Dendritic cell treated with granulocyte-macrophage colony-stimulating factor and Interleukin-4, amounts not matched to agents 40 ng/mL and 50 ng/mL, for 4 days (primary cell): ENCODE measurements at regions of chr4 and their contacts with region 1.

Region 1: GRCh38 chr4:73662709-73663546 is 42.7 kb upstream of the RASSF6 start:
- H3K4me3 Mint-ChIP-seq: no peak overlapping the region
- H3K27ac Mint-ChIP-seq: no peak overlapping the region
- H3K4me1 Mint-ChIP-seq: peaks cover 5% of the 10 kb centered on the region
- H3K27me3 Mint-ChIP-seq: peaks cover 7% of the 10 kb centered on the region

Region 2: DNA sequence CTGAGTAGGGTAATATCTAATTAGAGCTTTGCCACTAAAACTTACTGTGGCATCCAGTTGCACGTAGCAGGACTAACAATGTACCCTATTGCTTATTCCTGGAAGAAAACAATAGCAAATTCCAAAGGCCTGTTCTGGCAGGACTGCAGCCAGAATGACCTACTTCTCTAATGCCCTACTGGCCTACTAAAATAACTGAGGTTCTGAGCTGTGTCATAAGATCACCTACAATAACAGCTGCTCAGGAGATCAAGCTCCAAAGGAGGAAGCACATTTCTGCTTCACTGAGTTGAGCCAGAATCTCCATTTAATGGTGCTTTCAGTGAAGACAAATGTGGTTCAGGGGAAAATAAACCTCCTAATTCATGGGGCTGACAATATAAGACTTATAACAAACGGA is 35.3 kb after region 1 on chr4:
- intact Hi-C with region 1: no loop called
- H3K4me3 Mint-ChIP-seq: no peak overlapping the region
- H3K27ac Mint-ChIP-seq: no peak overlapping the region
- H3K4me1 Mint-ChIP-seq: peaks cover 27% of the 10 kb centered on the region
- H3K27me3 Mint-ChIP-seq: peaks cover 3% of the 10 kb centered on the region

Region 3: DNA sequence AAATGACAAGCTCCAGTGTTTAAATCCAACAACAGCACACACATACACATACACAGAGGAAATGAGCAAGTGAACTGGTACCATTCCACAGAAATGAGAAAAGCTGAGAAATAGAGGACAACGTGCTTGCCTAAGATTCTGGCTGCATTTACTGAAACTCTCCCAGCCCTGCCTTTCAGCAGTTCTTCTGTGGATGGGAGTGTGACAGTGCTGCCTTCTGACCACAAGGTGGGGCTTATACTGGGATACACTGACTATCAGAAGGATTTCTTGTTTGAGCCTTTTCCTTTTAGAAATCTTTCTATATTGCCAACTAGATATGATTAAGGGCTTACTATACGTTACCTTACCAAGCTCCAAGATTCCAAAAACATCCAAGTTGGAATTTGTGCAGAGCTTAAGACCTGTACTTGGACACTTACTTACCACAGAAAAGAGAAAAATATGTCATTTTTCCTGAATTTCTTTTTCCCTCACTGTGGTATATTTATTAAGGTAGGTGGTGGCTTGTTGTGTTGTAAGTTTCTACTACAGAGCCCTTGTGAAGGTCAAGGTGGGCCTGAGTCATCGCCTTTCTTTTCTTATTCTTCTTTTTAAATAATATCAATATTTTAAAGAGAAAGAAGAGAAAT is 66.7 kb after region 1 on chr4:
- intact Hi-C with region 1: loop called (anchors 10 kb)
- H3K4me3 Mint-ChIP-seq: no peak overlapping the region
- H3K27ac Mint-ChIP-seq: peak overlapping the region; percentile 45
- H3K4me1 Mint-ChIP-seq: peaks cover 67% of the 10 kb centered on the region
- H3K27me3 Mint-ChIP-seq: peaks cover 4% of the 10 kb centered on the region

Region 4: GRCh38 chr4:73776321-73776729 is 113.4 kb after region 1 on chr4:
- intact Hi-C with region 1: loop called (anchors 10 kb)
- H3K4me3 Mint-ChIP-seq: no peak overlapping the region
- H3K27ac Mint-ChIP-seq: no peak overlapping the region
- H3K4me1 Mint-ChIP-seq: peaks cover 6% of the 10 kb centered on the region
- H3K27me3 Mint-ChIP-seq: peaks cover 13% of the 10 kb centered on the region

Region 5: DNA sequence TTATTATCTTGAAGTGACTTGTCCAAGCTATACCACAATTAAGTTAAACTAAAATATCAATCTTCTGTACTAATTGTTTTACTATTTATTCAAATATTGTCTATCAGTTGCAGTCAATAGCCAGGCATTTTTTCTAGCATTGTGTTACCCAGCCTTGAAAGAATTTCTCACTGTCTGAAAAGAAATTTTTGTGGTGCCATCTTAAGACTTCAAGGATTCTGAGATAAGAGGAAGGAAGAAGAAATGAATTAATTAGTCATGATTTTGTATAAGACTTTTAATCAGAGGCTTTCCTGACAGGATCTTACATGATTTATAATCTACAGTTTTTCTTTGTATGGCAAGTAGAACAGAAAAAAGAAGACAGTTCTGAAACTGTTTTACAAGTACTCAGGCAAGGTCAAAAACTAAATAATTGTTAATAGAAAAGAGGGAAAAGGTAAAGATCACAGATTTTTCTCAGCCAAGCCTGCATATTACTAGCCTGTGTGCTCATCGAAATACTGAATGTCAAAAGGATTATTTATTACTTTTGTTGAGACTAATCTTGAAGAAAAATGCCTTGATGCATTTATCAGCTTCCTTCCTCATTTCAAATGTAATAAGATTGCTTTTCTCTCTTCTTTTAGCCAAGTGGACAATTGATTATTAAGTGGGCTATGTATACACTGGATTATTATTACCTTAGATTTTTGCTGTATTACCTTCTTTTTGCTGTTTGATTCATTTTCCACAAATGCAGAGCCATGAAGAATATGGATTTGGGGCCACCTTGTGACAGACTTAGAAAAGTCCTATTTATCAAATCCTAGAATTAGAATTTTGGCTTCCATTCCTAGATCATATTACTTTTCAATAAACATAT is 260.1 kb after region 1 on chr4:
- intact Hi-C with region 1: loop called (anchors 5 kb)
- H3K4me3 Mint-ChIP-seq: no peak overlapping the region
- H3K27ac Mint-ChIP-seq: no peak overlapping the region
- H3K4me1 Mint-ChIP-seq: no peaks in the 10 kb centered on the region
- H3K27me3 Mint-ChIP-seq: no peaks in the 10 kb centered on the region

Region 6: DNA sequence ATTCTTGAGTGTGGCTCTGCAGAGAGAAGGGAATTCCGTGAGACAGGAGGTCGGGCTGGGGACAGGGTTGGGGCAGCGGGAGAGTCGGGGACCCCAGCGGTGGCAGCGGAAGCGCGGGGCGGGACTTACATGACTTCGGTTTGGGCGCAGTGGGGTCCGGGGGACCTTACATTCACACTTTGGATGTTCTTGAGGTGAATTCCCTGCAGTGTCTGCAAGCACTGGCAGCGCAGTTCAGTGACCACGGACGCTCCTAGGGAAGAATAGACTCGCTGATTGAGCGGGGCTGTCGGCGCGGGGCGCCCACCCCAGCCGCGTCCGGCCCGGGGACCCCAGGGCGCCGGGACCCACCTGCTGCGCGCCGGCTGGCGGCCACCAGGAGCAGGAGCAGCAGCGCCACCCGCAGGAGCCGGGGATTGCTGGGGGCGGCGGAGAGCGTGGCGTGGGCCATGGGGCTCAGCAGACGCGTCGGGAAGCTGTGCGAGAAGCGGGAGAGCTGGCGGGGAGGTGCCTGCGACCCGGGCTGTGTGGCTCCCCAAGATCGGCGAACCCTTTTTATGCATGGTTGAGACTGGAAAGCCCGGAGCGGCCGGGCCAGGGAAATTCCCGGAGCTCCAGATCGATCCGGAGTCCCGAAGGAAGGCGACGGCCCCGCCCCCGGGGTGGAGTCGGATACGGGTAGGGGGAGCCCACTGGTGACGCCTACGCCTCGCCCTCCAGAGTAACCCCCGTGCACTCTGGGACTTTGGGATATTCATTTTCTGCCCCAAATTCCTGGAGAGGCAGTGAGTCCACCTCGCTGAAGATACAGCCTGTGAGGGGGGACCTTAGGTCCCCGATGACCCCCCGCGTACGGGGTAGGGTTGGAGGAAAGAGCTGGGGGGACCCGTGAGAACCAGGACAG is 375.5 kb after region 1 on chr4 and contains the start of gene CXCL3:
- intact Hi-C with region 1: loop called (anchors 10 kb)
- H3K4me3 Mint-ChIP-seq: peak within 1 kb of the TSS; percentile 82
- H3K27ac Mint-ChIP-seq: peak within 1 kb of the TSS; percentile 86
- H3K4me1 Mint-ChIP-seq: peaks cover 41% of the 10 kb centered on the region
- H3K27me3 Mint-ChIP-seq: peaks cover 29% of the 10 kb centered on the region

Region 7: DNA sequence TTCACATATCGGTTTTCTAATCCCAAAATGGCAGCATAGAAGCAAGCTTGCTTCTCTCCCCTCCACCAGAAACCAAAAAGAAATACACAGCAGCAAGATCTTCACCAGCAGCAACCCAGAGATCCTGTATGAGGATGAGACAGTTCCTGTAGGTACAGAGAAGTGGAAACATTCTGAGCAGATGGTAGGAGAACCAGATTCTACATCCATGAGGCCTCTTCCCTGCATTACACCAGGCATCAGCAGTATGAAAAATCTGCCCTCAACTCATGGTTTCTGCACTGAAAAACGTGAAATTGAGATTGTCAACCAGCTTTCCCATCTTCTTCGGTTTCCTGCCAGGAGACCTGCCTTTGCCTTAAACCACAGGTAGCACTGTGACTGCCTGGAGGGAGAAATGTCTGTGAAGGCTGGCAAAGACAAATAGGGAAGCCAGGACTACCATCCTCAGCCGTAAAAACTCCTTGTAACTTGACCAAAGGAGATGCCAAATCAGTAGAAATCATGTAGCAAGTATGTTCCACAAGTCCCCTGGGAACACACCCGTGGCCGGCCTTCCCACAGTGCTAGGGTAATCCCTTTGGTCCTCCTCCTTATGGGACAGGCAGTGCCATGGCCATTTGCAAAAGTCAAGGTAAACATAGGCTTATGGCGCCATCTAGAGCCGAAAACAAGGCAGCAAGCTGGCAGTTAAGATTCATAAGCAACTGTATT is 471.0 kb after region 1 on chr4:
- intact Hi-C with region 1: loop called (anchors 1 kb)
- H3K4me3 Mint-ChIP-seq: no peak overlapping the region
- H3K27ac Mint-ChIP-seq: no peak overlapping the region
- H3K4me1 Mint-ChIP-seq: no peaks in the 10 kb centered on the region
- H3K27me3 Mint-ChIP-seq: peaks cover 1% of the 10 kb centered on the region